ENCODE measurements at regions of chr3 and their contacts with region 1.

Region 1: DNA sequence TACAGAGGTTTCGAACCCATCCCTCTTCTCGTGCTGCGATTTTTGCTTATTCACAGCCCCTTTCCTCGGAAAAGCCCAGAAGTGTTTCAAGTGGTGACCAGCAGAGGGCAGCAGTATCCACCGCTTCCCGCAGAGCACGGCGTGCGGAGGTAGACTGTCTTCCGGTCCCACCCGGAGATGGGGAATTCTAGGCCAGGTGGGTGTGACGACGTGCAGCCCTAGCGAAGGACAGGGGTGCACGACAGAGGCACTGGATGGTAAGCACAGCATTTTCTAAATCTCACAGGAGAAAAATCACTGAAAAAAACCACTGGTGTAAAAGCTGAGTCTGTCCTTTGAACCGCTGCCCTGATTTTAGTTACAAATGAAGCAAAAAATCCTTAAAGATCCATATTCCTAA is 7.4 kb upstream of the PSMD6 start:
- DNase-seq: peak; percentile 86 to 89
- H3K4me3 ChIP-seq: no peak overlapping the region
- H3K27ac ChIP-seq: no peak overlapping the region
- H3K4me1 ChIP-seq: peaks cover 0 to 7% (median 3%) of the 10 kb centered on the region in 4 experiments; a peak in 5 of 7 replicates
- H3K27me3 ChIP-seq: no peaks in the 10 kb centered on the region
- CTCF ChIP-seq: peak; percentile 82 to 94 (median 89)
- EP300 ChIP-seq: no peak
- POLR2A ChIP-seq: no peak
- RAD21 ChIP-seq: peak; percentile 98 to 99

Region 2: GRCh38 chr3:64053581-64054328 is 23.0 kb after region 1 on chr3:
- CTCF ChIA-PET with region 1: interaction called, 17 read pairs
- POLR2A ChIA-PET with region 1: no interaction called
- DNase-seq: no peak
- H3K4me3 ChIP-seq: no peak overlapping the region
- H3K27ac ChIP-seq: no peak overlapping the region
- H3K4me1 ChIP-seq: peaks cover 3 to 15% (median 11%) of the 10 kb centered on the region in 4 experiments; a peak in 6 of 7 replicates
- H3K27me3 ChIP-seq: no peaks in the 10 kb centered on the region
- CTCF ChIP-seq: no peak
- EP300 ChIP-seq: no peak
- POLR2A ChIP-seq: no peak
- RAD21 ChIP-seq: no peak

Region 3: DNA sequence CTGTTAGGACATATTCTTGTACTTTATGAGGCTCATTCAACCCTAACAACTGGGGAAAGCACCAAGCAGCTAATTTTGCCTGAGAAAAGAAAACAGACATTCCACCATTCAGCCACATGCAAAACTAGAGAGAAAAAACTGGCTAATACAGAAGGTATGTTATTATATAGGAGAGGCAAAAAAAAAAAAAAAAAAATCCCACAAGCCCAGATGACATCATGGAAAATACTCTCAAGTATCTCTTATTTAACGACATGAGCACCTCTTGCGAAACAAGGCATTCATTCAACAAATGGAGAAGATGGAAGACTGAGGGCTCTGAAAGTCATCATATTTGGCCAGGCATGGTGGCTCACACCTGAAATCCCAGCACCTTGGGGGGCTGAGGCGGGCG is 133.0 kb after region 1 on chr3:
- CTCF ChIA-PET with region 1: interaction called, 29 read pairs
- POLR2A ChIA-PET with region 1: no interaction called
- DNase-seq: no peak
- H3K4me3 ChIP-seq: no peak overlapping the region
- H3K27ac ChIP-seq: no peak overlapping the region
- H3K4me1 ChIP-seq: peaks cover 3 to 22% (median 15%) of the 10 kb centered on the region in 4 experiments; a peak in 5 of 7 replicates
- H3K27me3 ChIP-seq: no peaks in the 10 kb centered on the region
- CTCF ChIP-seq: no peak
- EP300 ChIP-seq: no peak
- POLR2A ChIP-seq: no peak
- RAD21 ChIP-seq: no peak